ENCODE measurements at regions of chr10 and their contacts with region 1.

Region 1: GRCh38 chr10:99659031-99659867 is at the start of gene ENTPD7:
- DNase-seq: peak; percentile 97 to 98
- H3K4me3 ChIP-seq: peak within 1 kb of the TSS; percentile 94
- H3K4me3 Mint-ChIP-seq: peak within 1 kb of the TSS; percentile 79
- H3K27ac Mint-ChIP-seq: peak within 1 kb of the TSS; percentile 69
- H3K4me1 ChIP-seq: peaks cover 19% of the 10 kb centered on the region
- H3K4me1 Mint-ChIP-seq: peaks cover 24% of the 10 kb centered on the region
- H3K27me3 ChIP-seq: no peaks in the 10 kb centered on the region
- H3K27me3 Mint-ChIP-seq: no peaks in the 10 kb centered on the region
- CTCF ChIP-seq: peak; percentile 21 to 38
- total RNA-seq, gene ENTPD7: 35.5 and 36.0 TPM in 2 replicates

Region 2: DNA sequence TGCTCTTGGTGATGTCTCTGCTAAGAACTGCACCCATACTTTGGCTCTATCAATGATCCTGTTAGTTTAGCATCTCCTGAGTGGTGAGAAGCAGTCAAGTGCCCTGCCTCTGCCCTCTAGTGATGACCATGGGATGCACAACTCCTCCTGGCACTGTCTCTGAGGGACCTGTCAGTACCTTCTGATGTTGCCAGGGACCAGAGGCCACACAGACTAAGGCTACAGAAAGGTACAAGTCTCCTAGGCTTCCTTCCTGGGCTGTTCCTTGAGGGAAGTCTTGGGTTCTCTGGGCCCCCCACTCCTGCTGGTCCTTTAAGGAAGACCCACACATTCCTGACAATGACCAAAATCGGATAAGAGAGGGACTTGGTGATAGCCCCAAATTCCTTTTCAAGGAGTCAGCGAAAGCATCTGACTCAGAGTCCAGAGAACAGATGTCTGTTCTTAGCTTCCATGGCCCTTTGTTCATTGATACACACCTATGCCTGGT is 111.2 kb before region 1 on chr10:
- CTCF ChIA-PET with region 1: no interaction called
- POLR2A ChIA-PET with region 1: no interaction called
- intact Hi-C with region 1: no loop called
- DNase-seq: peak in 1 of 2 experiments; percentile 53
- H3K4me3 ChIP-seq: no peak overlapping the region
- H3K4me3 Mint-ChIP-seq: no peak overlapping the region
- H3K27ac Mint-ChIP-seq: no peak overlapping the region
- H3K4me1 ChIP-seq: peaks cover 13% of the 10 kb centered on the region
- H3K4me1 Mint-ChIP-seq: peaks cover 7% of the 10 kb centered on the region
- H3K27me3 ChIP-seq: no peaks in the 10 kb centered on the region
- H3K27me3 Mint-ChIP-seq: no peaks in the 10 kb centered on the region
- CTCF ChIP-seq: peak; percentile 21 to 63

Region 3: DNA sequence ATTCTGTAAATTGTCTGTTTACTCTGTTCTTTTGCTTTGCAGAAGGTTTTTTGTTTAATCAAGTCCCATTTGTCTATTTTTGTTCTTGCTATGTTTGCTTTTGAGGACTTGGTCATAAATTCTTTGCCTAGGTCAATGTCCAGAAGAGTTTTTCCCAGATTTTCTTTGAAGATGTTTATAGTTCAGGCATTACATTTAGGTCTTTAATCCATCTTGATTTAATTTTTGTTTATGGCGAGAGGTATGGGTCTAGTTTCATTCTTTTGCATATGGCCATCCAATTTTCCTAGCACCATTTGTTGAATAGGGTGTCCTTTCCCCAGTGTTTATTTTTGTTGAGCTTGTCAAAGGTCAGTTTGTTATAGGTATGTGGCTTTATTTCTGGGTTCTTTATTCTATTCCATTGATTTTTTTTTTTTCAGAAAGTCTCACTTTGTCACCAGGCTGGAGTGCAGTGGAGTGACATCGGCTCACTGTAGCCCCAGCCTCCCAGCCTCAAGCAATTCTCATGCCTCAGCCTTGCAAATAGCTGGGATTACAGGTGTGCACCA is 11.6 kb before region 1 on chr10:
- CTCF ChIA-PET with region 1: interaction called, 7 read pairs
- POLR2A ChIA-PET with region 1: interaction called, 12 read pairs
- intact Hi-C with region 1: no loop called
- DNase-seq: peak; percentile 59 to 69
- H3K4me3 ChIP-seq: no peak overlapping the region
- H3K4me3 Mint-ChIP-seq: peak overlapping the region; percentile 61
- H3K27ac Mint-ChIP-seq: peak overlapping the region; percentile 72
- H3K4me1 ChIP-seq: peaks cover 59% of the 10 kb centered on the region
- H3K4me1 Mint-ChIP-seq: peaks cover 43% of the 10 kb centered on the region
- H3K27me3 ChIP-seq: no peaks in the 10 kb centered on the region
- H3K27me3 Mint-ChIP-seq: no peaks in the 10 kb centered on the region
- CTCF ChIP-seq: no peak

Region 4: GRCh38 chr10:99732033-99732912 is 73.0 kb after region 1 on chr10 and contains the starts of genes COX15 and CUTC:
- CTCF ChIA-PET with region 1: interaction called, 5 read pairs
- POLR2A ChIA-PET with region 1: interaction called, 15 read pairs
- intact Hi-C with region 1: no loop called
- DNase-seq: peak; percentile 97 to 98
- H3K4me3 ChIP-seq: peak within 1 kb of the TSS; percentile 98
- H3K4me3 Mint-ChIP-seq: peak within 1 kb of the TSS; percentile 96
- H3K27ac Mint-ChIP-seq: peak within 1 kb of the TSS; percentile 97
- H3K4me1 ChIP-seq: no peaks in the 10 kb centered on the region; the same call in 1 of the 2 replicates
- H3K4me1 Mint-ChIP-seq: peaks cover 13% of the 10 kb centered on the region
- H3K27me3 ChIP-seq: no peaks in the 10 kb centered on the region
- H3K27me3 Mint-ChIP-seq: no peaks in the 10 kb centered on the region
- CTCF ChIP-seq: peak; percentile 61 to 69
- total RNA-seq, gene COX15: 47.6 and 50.2 TPM in 2 replicates
- total RNA-seq, gene CUTC: 27.6 and 30.1 TPM in 2 replicates

Region 5: DNA sequence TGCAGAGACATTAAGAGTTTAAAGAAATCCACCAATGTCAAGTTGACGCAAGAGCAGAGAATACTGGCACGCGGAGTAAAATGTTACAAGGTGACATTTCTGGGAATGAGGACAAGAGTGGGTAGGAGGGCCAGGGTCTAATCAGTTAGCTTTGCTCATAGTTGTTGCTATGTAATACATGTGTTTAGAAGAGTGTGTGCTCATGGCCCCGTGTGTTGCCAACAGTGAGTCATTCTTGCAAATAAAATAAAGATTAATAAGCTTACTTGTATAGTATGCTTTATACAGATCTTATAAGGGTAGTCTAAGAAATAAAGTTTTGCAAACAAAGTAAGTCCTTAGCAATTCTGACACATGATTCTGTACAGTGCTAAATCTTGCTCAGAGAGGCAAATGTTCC is 286.0 kb after region 1 on chr10:
- CTCF ChIA-PET with region 1: no interaction called
- POLR2A ChIA-PET with region 1: no interaction called
- intact Hi-C with region 1: no loop called
- DNase-seq: no peak
- H3K4me3 ChIP-seq: no peak overlapping the region
- H3K4me3 Mint-ChIP-seq: no peak overlapping the region
- H3K27ac Mint-ChIP-seq: no peak overlapping the region
- H3K4me1 ChIP-seq: no peaks in the 10 kb centered on the region
- H3K4me1 Mint-ChIP-seq: no peaks in the 10 kb centered on the region
- H3K27me3 ChIP-seq: no peaks in the 10 kb centered on the region
- H3K27me3 Mint-ChIP-seq: no peaks in the 10 kb centered on the region
- CTCF ChIP-seq: no peak